Endothelial cell of umbilical vein (primary cell): ENCODE measurements at regions of chr5 and their contacts with region 1.

Region 1: DNA sequence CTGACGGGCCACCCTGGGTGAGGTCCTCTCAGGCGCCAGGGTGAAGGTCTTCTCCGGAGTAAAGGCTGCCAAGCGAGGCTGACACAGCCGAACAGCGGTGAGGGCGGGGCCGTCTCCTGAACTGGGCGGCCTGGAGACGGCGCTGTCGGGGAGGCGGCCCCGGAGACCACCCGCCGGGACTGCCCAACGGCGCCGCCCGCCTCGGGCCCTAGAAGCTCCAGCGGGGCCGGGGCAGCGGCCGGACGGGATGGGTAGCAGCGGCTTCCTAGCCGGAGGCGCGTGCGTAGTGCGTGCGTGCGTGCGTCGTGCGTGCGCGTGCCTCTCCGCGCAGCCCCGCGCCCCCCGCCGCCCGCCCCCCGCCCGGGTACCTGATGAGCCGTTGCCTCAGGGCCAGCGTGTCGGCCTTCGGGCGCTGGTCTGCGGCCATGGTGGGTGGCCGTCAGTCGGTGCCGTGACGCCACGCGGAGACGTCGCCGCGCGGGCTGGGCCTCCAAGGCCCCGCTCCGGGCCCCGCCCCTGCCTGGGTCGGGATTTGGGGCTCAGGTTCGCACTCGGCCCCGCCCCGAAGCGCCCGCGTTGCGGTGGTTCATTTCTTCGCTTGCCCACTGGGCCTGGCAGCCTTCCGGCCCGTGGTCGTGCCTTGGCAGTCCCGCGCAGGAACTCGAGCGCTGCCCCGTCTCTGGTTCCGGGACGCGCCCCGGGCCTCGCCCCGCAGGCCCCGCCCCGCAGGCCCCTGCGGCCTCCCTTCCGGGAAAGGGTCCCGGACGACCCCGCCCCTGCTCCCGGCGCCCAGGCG is at the start of gene PHYKPL:
- DNase-seq: peak; percentile 71
- H3K4me3 ChIP-seq: peak within 1 kb of the TSS; percentile 49 to 90 (median 65)
- H3K27ac ChIP-seq: peak within 1 kb of the TSS; percentile 54
- H3K4me1 ChIP-seq: peaks cover 16% of the 10 kb centered on the region
- H3K27me3 ChIP-seq: no peaks in the 10 kb centered on the region
- CTCF ChIP-seq: peak in 1 of 2 donors; percentile 7
- POLR2A ChIP-seq: peak; percentile 87
- total RNA-seq, gene PHYKPL: 80.5 and 81.7 TPM in 2 replicates

Region 2: GRCh38 chr5:178250263-178250662 is 17.9 kb after region 1 on chr5:
- CTCF ChIA-PET with region 1: interaction called, 10 read pairs
- POLR2A ChIA-PET with region 1: no interaction called
- dilution Hi-C with region 1: no loop called
- intact Hi-C with region 1: no loop called
- DNase-seq: no peak
- H3K4me3 ChIP-seq: no peak overlapping the region
- H3K27ac ChIP-seq: no peak overlapping the region
- H3K4me1 ChIP-seq: no peaks in the 10 kb centered on the region
- H3K27me3 ChIP-seq: no peaks in the 10 kb centered on the region
- CTCF ChIP-seq: no peak
- POLR2A ChIP-seq: no peak

Region 3: DNA sequence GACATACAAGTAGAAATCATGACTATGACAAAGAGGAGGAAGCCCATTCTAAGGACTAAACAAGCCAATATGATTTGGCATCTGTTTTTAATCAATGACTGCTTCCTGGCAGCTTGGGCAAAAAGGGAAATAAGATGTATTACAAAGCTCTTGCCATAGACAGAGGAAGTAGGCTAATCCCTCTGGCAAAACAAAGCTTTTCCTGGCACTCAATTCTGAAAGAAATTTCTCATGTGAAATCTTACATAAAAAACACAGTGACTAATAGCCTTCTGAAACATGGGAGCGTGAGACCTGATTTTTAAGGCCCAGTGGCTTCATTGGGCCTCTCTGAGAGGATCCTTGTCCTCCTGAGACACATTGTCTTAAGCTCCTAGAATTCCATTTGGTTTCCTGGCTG is 264.3 kb after region 1 on chr5:
- CTCF ChIA-PET with region 1: no interaction called
- POLR2A ChIA-PET with region 1: no interaction called
- dilution Hi-C with region 1: no loop called
- intact Hi-C with region 1: loop called (anchors 2 kb)
- DNase-seq: peak; percentile 64
- H3K4me3 ChIP-seq: no peak overlapping the region
- H3K27ac ChIP-seq: peak overlapping the region; percentile 70
- H3K4me1 ChIP-seq: peaks cover 9% of the 10 kb centered on the region
- H3K27me3 ChIP-seq: no peaks in the 10 kb centered on the region
- CTCF ChIP-seq: no peak
- POLR2A ChIP-seq: no peak

Region 4: DNA sequence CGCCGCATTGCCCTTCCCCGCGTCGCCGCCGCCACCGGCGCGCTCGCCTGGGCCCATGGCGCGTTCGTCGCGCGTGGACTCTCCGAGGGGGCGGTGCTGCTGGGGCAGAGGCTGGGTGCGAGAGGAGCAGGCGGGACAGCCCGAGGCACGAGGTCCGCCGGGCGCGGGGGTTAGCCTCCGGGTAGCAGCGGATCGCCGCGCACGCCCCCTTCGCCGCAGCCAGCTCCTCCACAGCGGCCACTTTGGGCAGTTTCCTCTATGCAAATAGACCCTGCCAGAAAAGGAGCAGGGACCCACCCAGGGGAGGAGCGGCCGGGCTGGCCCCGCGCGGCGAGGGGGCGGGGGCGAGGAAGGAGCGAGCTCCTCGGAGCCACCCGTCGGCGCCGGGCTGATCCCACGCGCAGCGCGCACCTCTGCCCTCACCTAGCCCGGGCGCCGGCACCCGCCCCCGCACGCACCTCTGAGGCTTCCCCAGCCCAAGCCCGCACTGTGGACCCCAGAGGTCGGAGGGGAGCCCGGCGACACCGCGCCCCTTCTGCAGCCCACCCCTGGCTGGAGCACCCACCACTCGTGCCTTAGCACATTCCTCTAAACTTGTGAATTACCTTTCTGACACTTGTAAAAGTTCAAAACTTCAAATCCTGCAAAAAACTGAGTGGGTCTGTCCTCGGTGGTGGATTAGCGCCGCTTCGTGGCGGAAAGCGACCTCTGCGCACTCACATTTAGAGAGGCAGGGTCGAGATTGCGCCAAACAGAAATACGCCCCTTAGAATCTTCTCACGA is 358.0 kb after region 1 on chr5 and contains the start of gene COL23A1:
- CTCF ChIA-PET with region 1: interaction called, 8 read pairs
- POLR2A ChIA-PET with region 1: no interaction called
- dilution Hi-C with region 1: no loop called
- intact Hi-C with region 1: loop called (anchors 1 kb)
- DNase-seq: peak; percentile 55
- H3K4me3 ChIP-seq: peak within 1 kb of the TSS in 1 of 3 experiments; percentile 29
- H3K27ac ChIP-seq: no peak within 1 kb of the TSS
- H3K4me1 ChIP-seq: peaks cover 6% of the 10 kb centered on the region
- H3K27me3 ChIP-seq: peaks cover 39 to 58% of the 10 kb centered on the region in 2 experiments
- CTCF ChIP-seq: peak; percentile 72 to 77
- POLR2A ChIP-seq: no peak
- total RNA-seq, gene COL23A1: not detected in 2 replicates

Region 5: DNA sequence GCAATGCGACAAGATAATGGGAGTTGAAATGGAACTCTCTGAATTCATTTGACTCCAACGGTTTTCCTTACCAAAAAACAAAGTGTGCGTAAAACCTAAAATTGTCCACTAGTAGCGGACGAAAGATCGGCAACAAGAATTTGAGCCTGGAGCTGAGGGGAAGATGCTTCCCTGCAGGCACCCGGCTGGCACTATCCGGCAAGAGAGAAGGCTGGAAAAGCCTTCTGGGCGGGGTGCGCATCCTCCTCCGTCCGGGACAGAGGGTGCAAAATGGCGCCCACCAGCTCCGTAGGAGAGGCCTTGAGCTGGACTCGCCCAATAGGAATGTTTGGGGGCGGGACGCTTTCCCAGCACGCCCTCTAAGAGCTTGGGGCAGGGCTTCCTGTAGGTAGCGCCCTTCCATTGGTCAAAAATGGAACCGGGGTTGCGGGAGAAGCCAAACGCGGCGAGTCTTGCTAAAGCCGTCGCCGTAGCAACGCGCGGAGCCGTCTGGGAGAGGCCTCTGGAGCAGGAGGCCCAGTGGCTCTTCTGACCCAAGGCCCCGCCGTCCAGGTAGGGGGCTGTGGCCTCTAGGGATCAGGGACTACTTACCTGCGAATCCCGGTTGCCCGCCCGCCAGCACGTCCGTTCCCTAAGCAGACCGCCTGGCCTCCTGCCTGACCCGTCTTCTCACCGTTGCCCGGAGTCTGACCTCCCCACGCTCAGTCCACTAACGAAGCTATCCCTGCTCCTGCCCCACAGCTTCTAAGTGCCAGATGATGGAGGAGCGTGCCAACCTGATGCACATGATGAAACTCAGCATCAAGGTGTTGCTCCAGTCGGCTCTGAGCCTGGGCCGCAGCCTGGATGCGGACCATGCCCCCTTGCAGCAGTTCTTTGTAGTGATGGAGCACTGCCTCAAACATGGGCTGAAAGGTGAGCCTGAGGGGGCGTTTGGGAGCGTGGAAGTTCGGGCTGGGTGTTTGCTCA is 1327.2 kb after region 1 on chr5:
- CTCF ChIA-PET with region 1: no interaction called
- POLR2A ChIA-PET with region 1: no interaction called
- dilution Hi-C with region 1: no loop called
- intact Hi-C with region 1: loop called (anchors 5 kb)
- DNase-seq: peak; percentile 98
- H3K4me3 ChIP-seq: peak overlapping the region; percentile 22 to 83 (median 48)
- H3K27ac ChIP-seq: peak overlapping the region; percentile 56
- H3K4me1 ChIP-seq: peaks cover 13% of the 10 kb centered on the region
- H3K27me3 ChIP-seq: no peaks in the 10 kb centered on the region
- CTCF ChIP-seq: no peak
- POLR2A ChIP-seq: peak; percentile 90